ENCODE measurements at regions of chr11 and their contacts with region 1.

Region 1: DNA sequence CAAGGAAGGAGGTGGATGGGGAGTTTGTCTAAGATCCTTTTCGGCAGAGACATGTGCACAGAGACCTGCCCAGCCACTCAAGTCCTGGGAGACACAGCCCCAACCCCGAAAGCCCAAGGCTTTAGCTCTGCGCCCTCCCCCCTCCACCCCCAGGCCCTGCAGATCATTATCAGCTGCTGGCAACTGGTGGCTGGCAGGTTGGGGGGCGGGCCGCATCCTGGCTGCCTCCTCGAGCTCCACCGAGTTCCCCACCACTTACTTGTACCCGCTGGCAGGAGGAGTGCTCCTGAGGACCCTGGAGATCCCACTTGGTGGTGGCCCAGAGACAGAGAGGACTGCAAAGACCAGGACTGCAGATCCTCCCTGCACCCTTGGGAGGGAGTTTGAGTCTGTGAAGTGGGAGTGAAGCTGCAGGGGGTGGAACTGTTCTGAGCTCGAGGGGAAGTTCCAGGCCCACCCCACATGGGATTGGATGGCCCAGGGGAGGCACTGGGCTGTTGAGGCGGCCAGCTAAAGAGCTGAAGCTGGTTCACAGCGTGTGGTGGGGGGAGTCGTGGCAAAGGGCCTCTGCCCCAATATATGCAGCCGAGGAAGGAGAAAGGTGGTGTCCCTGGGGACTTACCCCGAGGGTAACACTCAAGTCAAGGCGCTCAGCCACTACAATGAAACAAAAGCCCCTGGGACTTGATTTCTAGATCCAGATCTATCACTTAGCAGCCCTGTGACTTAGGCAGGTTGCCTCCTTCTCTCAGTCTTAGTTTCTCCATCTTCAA is 19.9 kb upstream of the CCDC86 start:
- DNase-seq: peak; percentile 19
- ATAC-seq: peak; percentile 84
- H3K4me3 ChIP-seq: no peak overlapping the region
- H3K27ac ChIP-seq: no peak overlapping the region
- H3K4me1 ChIP-seq: no peaks in the 10 kb centered on the region
- H3K27me3 ChIP-seq: no peaks in the 10 kb centered on the region; a peak in 1 of 4 replicates
- CTCF ChIP-seq: no peak
- EP300 ChIP-seq: 0 out of 4 replicates have a peak, but pooled peaks of 1 of the 2 experiments have one; percentile 29
- POLR2A ChIP-seq: no peak
- RAD21 ChIP-seq: no peak

Region 2: DNA sequence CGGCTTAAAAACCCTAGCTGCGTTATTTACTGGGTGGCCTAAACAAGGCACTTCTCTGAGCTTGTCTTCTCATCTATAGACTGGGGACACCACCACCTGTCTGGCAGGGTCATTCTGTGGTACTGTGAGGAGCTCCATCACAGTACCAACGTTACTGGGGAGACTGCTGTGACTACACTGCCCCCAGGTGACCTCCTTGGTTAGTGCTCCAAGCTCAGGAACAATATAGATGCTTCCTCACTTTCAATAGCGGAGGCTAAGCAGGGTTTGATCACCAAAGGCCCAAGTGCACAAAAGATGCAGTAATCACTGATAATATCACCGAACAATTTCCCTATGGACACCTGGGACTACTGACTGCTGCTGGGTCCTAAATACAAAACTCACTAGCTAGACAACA is 65.5 kb after region 1 on chr11:
- CTCF ChIA-PET with region 1: interaction called, 16 read pairs
- POLR2A ChIA-PET with region 1: no interaction called
- RAD21 ChIA-PET with region 1: no interaction called
- SMC1A ChIA-PET with region 1: interaction called, 6 read pairs
- in situ Hi-C with region 1: no loop called
- intact Hi-C with region 1: no loop called
- DNase-seq: no peak
- ATAC-seq: peak; percentile 93
- H3K4me3 ChIP-seq: no peak overlapping the region
- H3K27ac ChIP-seq: no peak overlapping the region
- H3K4me1 ChIP-seq: no peaks in the 10 kb centered on the region
- H3K27me3 ChIP-seq: no peaks in the 10 kb centered on the region
- CTCF ChIP-seq: peak; percentile 47 to 61 (median 58); a peak in 5 of 6 replicates
- EP300 ChIP-seq: no peak
- POLR2A ChIP-seq: no peak
- RAD21 ChIP-seq: peak; percentile 73